Activated CD4-positive, alpha-beta T cell treated with anti-CD3 and anti-CD28 coated beads for 36 hours (primary cell): ENCODE measurements at regions of chr16 and their contacts with region 1.

Region 1: DNA sequence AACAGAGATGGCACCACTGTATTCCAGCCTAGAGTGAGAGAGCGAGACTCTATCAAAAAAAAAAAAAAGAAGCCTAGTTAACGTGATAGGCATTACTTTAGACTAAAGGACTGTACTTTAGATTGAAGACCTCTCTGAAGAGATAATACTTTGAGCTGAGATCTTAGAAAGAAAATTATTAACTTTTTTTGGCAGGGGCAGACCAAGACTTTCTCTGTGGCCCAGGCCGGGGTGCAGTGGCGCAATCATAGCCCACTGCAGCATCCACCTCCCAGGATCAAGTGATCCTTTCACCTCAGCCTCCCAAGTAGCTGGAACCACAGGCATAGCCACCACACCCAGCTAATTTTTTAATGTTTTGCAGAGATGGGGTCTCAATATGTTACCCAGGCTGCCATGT is 75.7 kb upstream of the TNRC6A start:
- DNase-seq: no peak
- ATAC-seq: no peak
- H3K4me3 Mint-ChIP-seq: no peak overlapping the region
- H3K27ac Mint-ChIP-seq: no peak overlapping the region
- H3K4me1 Mint-ChIP-seq: no peaks in the 10 kb centered on the region
- H3K27me3 Mint-ChIP-seq: peaks cover 2% of the 10 kb centered on the region

Region 2: GRCh38 chr16:24635900-24636610 is 17.7 kb before region 1 on chr16:
- CTCF ChIA-PET with region 1: no interaction called
- POLR2A ChIA-PET with region 1: no interaction called
- intact Hi-C with region 1: loop called in 1 of 2 experiments (anchors 2 kb)
- DNase-seq: no peak
- ATAC-seq: no peak
- H3K4me3 Mint-ChIP-seq: no peak overlapping the region
- H3K27ac Mint-ChIP-seq: no peak overlapping the region
- H3K4me1 Mint-ChIP-seq: no peaks in the 10 kb centered on the region
- H3K27me3 Mint-ChIP-seq: peaks cover 12% of the 10 kb centered on the region

Region 3: GRCh38 chr16:24689145-24689544 is 35.4 kb after region 1 on chr16:
- CTCF ChIA-PET with region 1: no interaction called
- POLR2A ChIA-PET with region 1: no interaction called
- intact Hi-C with region 1: no loop called
- DNase-seq: peak; percentile 49
- ATAC-seq: peak; percentile 33
- H3K4me3 Mint-ChIP-seq: no peak overlapping the region
- H3K27ac Mint-ChIP-seq: no peak overlapping the region
- H3K4me1 Mint-ChIP-seq: peaks cover 3% of the 10 kb centered on the region
- H3K27me3 Mint-ChIP-seq: peaks cover 5% of the 10 kb centered on the region